Colonic mucosa (tissue), 4 donors: ENCODE measurements at regions of chr3 and their contacts with region 1.

Region 1: DNA sequence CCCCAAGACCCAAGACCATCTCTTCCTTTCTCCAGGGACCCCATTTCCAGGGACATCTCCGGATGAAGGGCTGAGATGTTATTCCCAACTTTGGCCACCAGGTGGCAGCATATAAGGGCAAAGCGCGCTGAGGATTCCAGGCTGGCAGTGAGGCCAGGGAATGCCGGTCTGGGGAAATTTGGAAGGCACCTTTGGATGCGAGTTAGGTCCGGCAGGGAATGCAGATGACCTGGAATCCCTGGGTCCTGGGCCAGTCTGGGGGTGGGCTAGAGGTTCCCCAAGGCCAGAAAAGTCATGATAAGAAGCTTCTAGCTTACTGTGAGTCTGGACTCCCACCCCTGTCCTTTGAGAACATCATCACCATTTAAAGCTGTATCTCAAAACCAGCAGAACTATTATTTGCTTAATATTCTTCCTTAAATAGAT is 1.6 kb upstream of the CHST13 start:
- DNase-seq: peak; percentile 56
- H3K4me3 ChIP-seq: no peak overlapping the region
- H3K27ac ChIP-seq: no peak overlapping the region
- H3K4me1 ChIP-seq: no peaks in the 10 kb centered on the region
- H3K27me3 ChIP-seq: no peaks in the 10 kb centered on the region
- CTCF ChIP-seq: peak; percentile 90

Region 2: GRCh38 chr3:126654571-126655383 is 132.4 kb after region 1 on chr3 and contains the start of gene TXNRD3:
- intact Hi-C with region 1: loop called (anchors 10 kb)
- DNase-seq: peak; percentile 92
- H3K4me3 ChIP-seq: peak within 1 kb of the TSS; percentile 71
- H3K27ac ChIP-seq: peak within 1 kb of the TSS; percentile 21
- H3K4me1 ChIP-seq: no peaks in the 10 kb centered on the region
- H3K27me3 ChIP-seq: no peaks in the 10 kb centered on the region
- CTCF ChIP-seq: no peak
- total RNA-seq, gene TXNRD3: 3.6 to 7.5 TPM

Region 3: DNA sequence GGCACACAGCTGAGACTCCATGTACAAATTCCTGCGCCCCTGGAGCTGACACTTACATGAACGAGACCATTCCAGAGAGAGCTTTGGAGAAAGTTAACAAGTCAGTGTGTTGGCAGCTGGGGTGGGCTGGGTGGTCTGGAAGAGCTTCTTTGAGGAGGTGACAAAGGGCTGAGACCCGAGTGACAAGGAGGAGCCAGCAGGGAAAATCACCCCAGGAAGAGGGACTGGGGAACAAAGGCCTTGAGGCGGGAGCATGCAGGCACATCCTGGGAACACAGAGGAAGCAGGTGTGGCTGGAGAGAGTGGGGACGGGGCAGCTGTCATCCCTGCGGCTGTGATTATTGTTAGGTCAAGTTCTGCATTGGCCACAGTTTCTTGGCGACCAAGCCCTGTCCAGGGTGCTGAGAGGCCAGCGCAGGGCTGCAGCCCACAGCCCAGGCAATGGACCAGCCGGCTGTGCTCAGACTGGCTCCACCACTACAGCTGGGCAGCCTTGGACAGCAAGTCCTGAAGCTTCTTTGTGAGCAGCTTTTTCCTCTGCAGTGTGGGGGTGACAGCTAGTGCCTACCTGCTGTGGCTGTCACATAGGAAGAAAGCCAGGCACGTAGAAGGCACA is 636.3 kb after region 1 on chr3:
- intact Hi-C with region 1: no loop called
- DNase-seq: no peak
- H3K4me3 ChIP-seq: no peak overlapping the region
- H3K27ac ChIP-seq: no peak overlapping the region
- H3K4me1 ChIP-seq: no peaks in the 10 kb centered on the region
- H3K27me3 ChIP-seq: no peaks in the 10 kb centered on the region
- CTCF ChIP-seq: no peak

Region 4: DNA sequence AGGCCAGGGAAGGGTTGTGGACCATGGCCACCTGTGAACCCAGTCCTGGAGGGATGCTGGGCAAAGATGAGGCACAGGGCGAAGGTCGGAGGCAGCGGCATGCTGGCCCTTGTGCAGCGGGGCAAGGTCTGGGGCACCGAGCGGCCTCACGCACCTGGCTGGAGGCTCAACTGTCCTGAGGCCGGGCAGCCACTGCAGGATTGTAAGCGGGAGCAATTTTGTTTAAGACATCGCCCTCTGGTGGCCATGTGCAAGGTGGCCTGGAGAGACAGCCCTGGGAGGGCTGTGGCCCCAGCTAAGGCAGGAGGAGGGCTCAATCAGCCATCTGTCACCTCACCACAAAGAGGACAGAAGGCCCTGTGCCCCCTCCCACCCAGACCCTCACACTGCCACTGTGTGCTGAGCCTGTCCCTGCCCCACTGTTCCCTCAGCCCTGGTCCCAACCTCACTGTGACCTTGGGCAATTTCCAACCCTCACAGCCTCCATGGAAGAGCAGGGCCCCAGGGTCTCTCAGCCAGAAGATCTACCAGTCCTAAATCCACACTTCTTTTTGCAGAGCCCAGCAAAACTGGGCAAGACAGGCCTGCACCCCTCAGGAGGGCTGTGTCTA is 1021.9 kb after region 1 on chr3:
- intact Hi-C with region 1: loop called (anchors 10 kb)
- DNase-seq: peak; percentile 80
- H3K4me3 ChIP-seq: no peak overlapping the region
- H3K27ac ChIP-seq: no peak overlapping the region
- H3K4me1 ChIP-seq: peaks cover 13% of the 10 kb centered on the region
- H3K27me3 ChIP-seq: no peaks in the 10 kb centered on the region
- CTCF ChIP-seq: peak; percentile 86